ENCODE measurements at regions of chr7 and their contacts with region 1.

Region 1: DNA sequence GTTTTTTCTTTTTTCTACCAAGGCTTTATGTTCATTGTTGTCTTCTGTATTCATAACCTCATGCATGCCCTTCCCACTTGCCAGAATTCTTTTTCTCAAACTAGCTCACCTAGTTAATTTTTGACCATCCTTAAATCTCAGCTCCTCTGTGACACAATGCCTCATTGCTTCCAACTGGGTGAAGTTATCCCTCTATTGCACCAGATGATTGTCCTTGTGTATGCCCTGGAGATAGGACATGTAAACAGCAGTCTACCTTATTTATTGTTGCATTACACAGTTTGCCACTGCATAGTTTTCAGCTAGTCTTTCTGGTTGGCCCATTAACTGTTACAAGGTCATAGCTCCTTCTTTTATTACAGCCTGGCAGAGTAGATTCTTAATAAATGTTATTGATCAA is 763.1 kb upstream of the COBL start:
- DNase-seq: no peak
- ATAC-seq: no peak

Region 2: DNA sequence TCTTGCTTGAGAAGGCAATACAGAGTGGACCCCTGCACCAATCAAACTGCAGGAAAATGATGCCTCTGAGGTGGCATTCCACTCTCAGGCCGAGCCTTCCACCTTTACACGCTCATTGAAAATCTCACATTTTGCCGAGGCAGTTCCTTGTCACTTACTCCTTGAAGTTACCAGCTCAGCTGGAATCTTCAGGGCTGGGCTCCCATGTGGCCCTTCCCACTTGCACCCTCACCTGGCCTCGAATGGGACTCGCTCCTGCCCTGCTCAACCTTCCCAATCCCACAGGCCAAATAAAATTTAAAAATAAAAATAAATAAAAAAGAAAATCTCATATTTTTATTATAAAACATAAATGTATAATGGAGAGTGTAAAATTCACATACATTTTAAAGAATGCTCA is 27.6 kb after region 1 on chr7:
- intact Hi-C with region 1: loop called (anchors 1 kb)
- DNase-seq: no peak
- ATAC-seq: no peak

Measured in sciatic nerve (tissue), 2 donors.